ENCODE measurements at regions of chr1 and their contacts with region 1.

Region 1: DNA sequence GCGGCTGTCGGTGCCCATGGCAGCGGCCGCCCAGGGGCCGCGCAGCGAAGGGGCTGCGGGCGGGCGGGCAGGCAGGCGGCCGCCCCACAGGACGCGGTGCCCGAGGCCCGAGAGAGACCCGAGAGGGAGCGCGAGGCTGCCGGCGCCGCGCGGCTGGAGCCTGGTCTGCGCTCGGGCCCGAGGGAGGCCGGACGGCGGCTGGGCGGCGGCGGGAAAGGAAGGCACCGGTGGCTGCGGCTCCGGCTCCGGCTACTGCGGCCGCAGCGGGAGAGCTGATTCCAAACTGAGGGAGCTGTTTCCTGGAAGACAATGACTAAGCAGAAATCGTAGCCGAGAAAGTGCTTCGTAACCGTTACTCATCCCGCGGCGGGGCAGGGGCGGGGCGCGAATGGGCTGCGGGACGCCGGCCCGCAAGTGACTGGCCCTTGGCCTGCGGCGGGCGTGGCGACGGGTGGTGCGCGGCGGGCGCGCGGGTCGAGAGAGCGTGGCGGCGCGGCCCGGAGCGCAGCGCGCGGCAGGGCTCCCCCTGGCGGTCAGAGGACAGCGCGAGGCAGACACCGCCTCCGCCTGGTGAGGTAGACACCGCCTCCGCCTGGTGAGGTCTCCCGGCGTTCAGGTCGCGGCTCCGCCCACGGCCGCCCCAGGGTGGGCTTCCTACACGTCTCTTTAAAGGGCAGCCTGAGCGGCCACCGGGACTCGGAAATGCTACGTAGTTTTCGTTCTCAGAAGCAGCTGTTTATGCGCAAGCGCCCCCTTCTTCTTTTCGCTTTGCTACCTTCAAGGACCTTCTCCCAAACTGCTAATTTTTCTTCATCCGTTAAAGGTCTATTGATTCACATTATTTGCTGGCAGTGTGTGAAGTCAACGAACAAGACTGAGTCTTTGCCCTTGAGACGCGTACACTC is at the start of gene GCLM:
- DNase-seq: peak; percentile 88 to 91 (median 91)
- H3K4me3 ChIP-seq: peak within 1 kb of the TSS; percentile 83
- H3K4me3 Mint-ChIP-seq: peak within 1 kb of the TSS; percentile 88 to 97 (median 94)
- H3K27ac ChIP-seq: peak within 1 kb of the TSS; percentile 87
- H3K27ac Mint-ChIP-seq: peak within 1 kb of the TSS; percentile 90 to 99 (median 92)
- H3K4me1 ChIP-seq: peaks cover 22% of the 10 kb centered on the region
- H3K4me1 Mint-ChIP-seq: peaks cover 37 to 52% (median 48%) of the 10 kb centered on the region in 3 donors
- H3K27me3 ChIP-seq: no peaks in the 10 kb centered on the region
- H3K27me3 Mint-ChIP-seq: peaks cover 4 to 5% of the 10 kb centered on the region in 2 donors
- total RNA-seq, gene GCLM: 24.6 to 24.8 TPM

Region 2: DNA sequence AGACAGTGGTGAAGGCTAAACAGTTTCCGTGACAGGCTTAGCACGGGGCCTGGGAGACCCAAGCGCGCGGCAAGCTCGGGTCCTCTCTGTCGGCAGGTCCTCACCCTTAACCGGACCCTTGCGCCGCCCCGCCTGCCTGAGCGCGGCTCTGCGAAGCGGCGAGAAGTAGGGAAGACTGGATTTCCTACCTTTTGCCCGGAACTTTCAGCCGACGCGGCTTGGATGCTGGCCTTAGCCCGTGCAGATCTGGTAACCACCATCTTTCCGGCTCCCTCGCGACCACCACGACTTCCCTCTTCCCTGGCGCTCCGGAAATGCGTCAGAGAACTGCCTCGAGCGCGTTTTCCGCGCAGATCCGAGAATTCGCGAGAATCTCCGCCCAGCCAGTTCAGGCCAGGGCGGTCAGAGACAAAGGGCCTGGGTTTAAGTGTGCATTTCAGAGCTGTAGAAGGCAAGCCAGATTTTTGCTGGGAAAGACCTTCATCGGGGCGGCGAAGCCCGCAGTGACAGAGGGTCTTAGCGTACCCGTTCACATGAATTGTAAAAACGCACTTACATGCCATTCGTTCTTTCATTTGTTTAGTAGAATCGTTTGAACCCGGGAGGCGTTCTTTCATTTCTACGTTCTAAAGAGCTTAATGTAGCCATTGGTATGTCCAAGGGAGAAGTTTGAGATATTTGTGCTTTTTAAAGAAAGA is 30.4 kb before region 1 on chr1 and contains the start of gene DNTTIP2:
- CTCF ChIA-PET with region 1: interaction called, 17 read pairs
- POLR2A ChIA-PET with region 1: interaction called, 23 read pairs
- DNase-seq: peak; percentile 79 to 91 (median 87)
- H3K4me3 ChIP-seq: peak within 1 kb of the TSS; percentile 97
- H3K4me3 Mint-ChIP-seq: peak within 1 kb of the TSS; percentile 85 to 99 (median 95)
- H3K27ac ChIP-seq: peak within 1 kb of the TSS; percentile 98
- H3K27ac Mint-ChIP-seq: peak within 1 kb of the TSS; percentile 95 to 99 (median 98)
- H3K4me1 ChIP-seq: peaks cover 34% of the 10 kb centered on the region
- H3K4me1 Mint-ChIP-seq: peaks cover 45 to 59% (median 57%) of the 10 kb centered on the region in 3 donors
- H3K27me3 ChIP-seq: no peaks in the 10 kb centered on the region
- H3K27me3 Mint-ChIP-seq: no peaks in the 10 kb centered on the region
- total RNA-seq, gene DNTTIP2: 100 to 109 TPM

Region 3: GRCh38 chr1:93988634-93989350 is 79.4 kb after region 1 on chr1:
- CTCF ChIA-PET with region 1: no interaction called
- POLR2A ChIA-PET with region 1: no interaction called
- DNase-seq: no peak
- H3K4me3 ChIP-seq: no peak overlapping the region
- H3K4me3 Mint-ChIP-seq: no peak overlapping the region
- H3K27ac ChIP-seq: no peak overlapping the region
- H3K27ac Mint-ChIP-seq: no peak overlapping the region
- H3K4me1 ChIP-seq: no peaks in the 10 kb centered on the region
- H3K4me1 Mint-ChIP-seq: no peaks in the 10 kb centered on the region
- H3K27me3 ChIP-seq: no peaks in the 10 kb centered on the region
- H3K27me3 Mint-ChIP-seq: peaks cover 18 to 37% of the 10 kb centered on the region in 2 donors

Region 4: GRCh38 chr1:94270801-94271203 is 361.4 kb after region 1 on chr1:
- CTCF ChIA-PET with region 1: no interaction called
- POLR2A ChIA-PET with region 1: no interaction called
- DNase-seq: no peak
- H3K4me3 ChIP-seq: no peak overlapping the region
- H3K4me3 Mint-ChIP-seq: no peak overlapping the region
- H3K27ac ChIP-seq: no peak overlapping the region
- H3K27ac Mint-ChIP-seq: no peak overlapping the region
- H3K4me1 ChIP-seq: no peaks in the 10 kb centered on the region
- H3K4me1 Mint-ChIP-seq: no peaks in the 10 kb centered on the region
- H3K27me3 ChIP-seq: no peaks in the 10 kb centered on the region
- H3K27me3 Mint-ChIP-seq: peaks cover 11 to 31% of the 10 kb centered on the region in 2 donors